Naive thymus-derived CD8-positive, alpha-beta T cell (primary cell): ENCODE measurements at regions of chr5 and their contacts with region 1.

Region 1: GRCh38 chr5:169637085-169637548 is at the start of gene DOCK2:
- DNase-seq: peak; percentile 30 to 82 (median 60)
- ATAC-seq: peak; percentile 79 to 84
- H3K4me3 Mint-ChIP-seq: peak within 1 kb of the TSS; percentile 92 to 97 (median 94)
- H3K27ac Mint-ChIP-seq: peak within 1 kb of the TSS; percentile 92 to 97 (median 95)
- H3K4me1 Mint-ChIP-seq: peaks cover 31 to 53% (median 51%) of the 10 kb centered on the region in 4 donors
- H3K27me3 Mint-ChIP-seq: peaks cover 0 to 1% (median 0%) of the 10 kb centered on the region in 5 donors
- polyA plus RNA-seq, gene DOCK2: 59.5 to 84.6 (median 71.0) TPM

Region 2: DNA sequence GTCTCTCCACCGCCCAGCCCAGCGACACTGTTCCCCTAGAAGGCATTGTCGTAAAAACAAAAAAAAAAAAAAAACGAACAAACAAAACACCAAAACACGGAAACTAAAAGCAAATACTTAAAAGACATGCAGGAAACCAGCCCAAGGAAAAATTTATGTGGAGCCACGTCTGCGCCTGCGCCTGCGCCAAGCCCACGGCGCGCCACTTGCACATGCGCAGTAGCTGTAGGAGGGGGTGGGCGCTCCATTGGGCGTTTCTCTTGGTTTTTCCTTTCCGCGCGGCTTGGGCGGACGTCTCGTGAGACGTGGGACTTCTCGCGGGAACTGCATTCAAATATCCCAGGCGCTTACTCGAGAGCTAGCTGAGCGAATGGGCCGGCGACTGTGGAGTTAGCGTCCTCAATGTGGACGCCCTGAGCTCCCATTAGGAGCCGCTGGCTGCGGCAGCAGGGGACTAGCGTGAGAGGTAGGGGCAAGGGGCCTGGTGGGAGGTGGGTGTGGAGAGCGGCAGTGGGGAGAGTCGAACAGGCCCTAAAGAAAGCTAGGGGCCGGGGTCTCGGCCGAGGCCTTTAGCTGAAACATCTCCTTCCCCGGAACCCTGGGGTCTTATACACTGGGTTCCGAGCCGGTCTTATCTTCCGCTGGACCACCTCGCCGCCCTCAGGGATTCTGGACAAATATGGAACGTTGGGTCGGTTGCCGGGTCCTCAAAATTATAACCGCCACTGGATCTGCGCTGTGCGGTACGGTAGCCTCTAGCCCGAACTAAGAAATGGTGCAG is 53.5 kb before region 1 on chr5 and contains the start of gene SPDL1:
- POLR2A ChIA-PET with region 1: interaction called, 16 read pairs
- DNase-seq: peak; percentile 87 to 96 (median 92)
- ATAC-seq: peak; percentile 96 to 97
- H3K4me3 Mint-ChIP-seq: peak within 1 kb of the TSS; percentile 95 to 100 (median 98)
- H3K27ac Mint-ChIP-seq: peak within 1 kb of the TSS; percentile 89 to 98 (median 94)
- H3K4me1 Mint-ChIP-seq: peaks cover 7 to 32% (median 29%) of the 10 kb centered on the region in 4 donors
- H3K27me3 Mint-ChIP-seq: peaks cover 0 to 3% (median 0%) of the 10 kb centered on the region in 5 donors
- polyA plus RNA-seq, gene SPDL1: 6.2 to 7.8 (median 6.4) TPM

Region 3: DNA sequence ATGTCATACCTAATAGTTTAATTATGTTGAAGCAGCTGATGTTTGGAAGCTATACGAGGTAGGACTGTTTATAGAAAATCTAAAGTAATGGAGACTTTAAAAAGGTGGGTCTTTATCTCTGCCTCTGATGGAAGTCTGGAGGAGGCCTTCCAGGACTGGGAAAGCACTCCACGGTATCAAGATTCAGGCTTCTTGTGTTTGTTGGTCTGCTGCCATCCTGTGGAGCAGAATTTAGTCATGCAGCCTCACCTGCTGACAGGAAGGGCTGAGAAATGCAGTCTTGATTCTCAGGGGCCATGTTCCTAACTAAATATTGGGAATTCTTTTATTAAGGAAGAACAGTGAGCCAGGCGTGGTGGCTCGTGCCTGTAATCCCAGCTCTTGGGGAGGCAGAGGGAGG is 37.7 kb before region 1 on chr5:
- POLR2A ChIA-PET with region 1: no interaction called
- DNase-seq: no peak
- ATAC-seq: no peak
- H3K4me3 Mint-ChIP-seq: no peak overlapping the region
- H3K27ac Mint-ChIP-seq: no peak overlapping the region
- H3K4me1 Mint-ChIP-seq: no peaks in the 10 kb centered on the region
- H3K27me3 Mint-ChIP-seq: no peaks in the 10 kb centered on the region

Region 4: GRCh38 chr5:169626779-169627178 is 10.3 kb before region 1 on chr5:
- POLR2A ChIA-PET with region 1: no interaction called
- DNase-seq: no peak
- ATAC-seq: no peak
- H3K4me3 Mint-ChIP-seq: no peak overlapping the region
- H3K27ac Mint-ChIP-seq: no peak overlapping the region
- H3K4me1 Mint-ChIP-seq: peaks cover 0 to 4% (median 2%) of the 10 kb centered on the region in 4 donors
- H3K27me3 Mint-ChIP-seq: peaks cover 2 to 5% (median 4%) of the 10 kb centered on the region in 5 donors

Region 5: DNA sequence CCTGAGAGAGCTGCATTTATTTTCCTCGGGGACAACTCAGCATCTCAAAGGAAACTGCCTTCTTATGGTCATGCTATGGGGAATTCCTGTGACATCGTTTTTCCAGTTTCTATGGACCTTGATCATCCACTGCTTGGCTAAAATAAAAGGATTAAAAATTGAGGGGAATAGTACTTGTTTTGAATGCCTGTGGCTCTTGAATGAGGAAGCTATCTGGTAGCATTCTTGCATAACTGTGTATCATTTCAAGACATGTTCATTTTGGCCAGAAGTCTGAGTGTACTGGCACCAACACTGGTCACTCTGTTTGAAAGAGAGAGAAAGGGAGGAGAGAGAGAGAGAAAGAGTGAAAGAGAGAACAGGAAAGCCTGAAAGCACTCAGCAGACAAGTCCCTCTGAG is 116.7 kb after region 1 on chr5:
- POLR2A ChIA-PET with region 1: no interaction called
- DNase-seq: no peak
- ATAC-seq: no peak
- H3K4me3 Mint-ChIP-seq: no peak overlapping the region
- H3K27ac Mint-ChIP-seq: peak overlapping the region in 4 of 10 donors; percentile 2 to 71 (median 24)
- H3K4me1 Mint-ChIP-seq: peaks cover 0 to 8% (median 2%) of the 10 kb centered on the region in 4 donors
- H3K27me3 Mint-ChIP-seq: no peaks in the 10 kb centered on the region